BJ (cell line): ENCODE measurements at regions of chr22 and their contacts with region 1.

Region 1: GRCh38 chr22:17984114-17984513 is 40.2 kb downstream of the MICAL3 start:
- DNase-seq: no peak
- H3K4me3 ChIP-seq: no peak overlapping the region
- H3K27me3 ChIP-seq: no peaks in the 10 kb centered on the region
- CTCF ChIP-seq: no peak

Region 2: GRCh38 chr22:17897426-17897825 is 86.7 kb before region 1 on chr22:
- CTCF ChIA-PET with region 1: no interaction called
- POLR2A ChIA-PET with region 1: interaction called, 27 read pairs
- DNase-seq: no peak
- H3K4me3 ChIP-seq: no peak overlapping the region
- H3K27me3 ChIP-seq: no peaks in the 10 kb centered on the region
- CTCF ChIP-seq: no peak

Region 3: DNA sequence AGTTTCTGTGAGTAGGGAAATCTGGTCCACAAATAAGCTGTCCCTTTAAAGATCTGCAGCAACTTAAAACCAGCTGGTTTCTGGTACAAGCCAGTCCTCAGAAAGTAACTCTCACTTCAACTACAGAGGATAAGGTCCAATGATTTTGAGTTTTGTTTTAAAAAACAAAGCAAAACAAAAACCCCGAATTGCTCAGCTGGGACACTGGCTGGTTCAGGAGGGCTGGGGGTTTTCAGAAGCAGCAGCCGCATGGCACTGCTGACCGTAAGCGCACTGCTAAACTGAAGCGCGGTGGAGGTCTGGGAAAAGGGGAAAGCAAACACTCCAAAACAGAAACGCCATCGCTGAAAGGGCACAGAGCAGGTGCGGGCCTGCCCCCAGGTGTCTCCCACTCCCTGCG is 19.5 kb before region 1 on chr22:
- CTCF ChIA-PET with region 1: no interaction called
- POLR2A ChIA-PET with region 1: no interaction called
- DNase-seq: no peak
- H3K4me3 ChIP-seq: no peak overlapping the region
- H3K27me3 ChIP-seq: no peaks in the 10 kb centered on the region
- CTCF ChIP-seq: no peak